CD8-positive, alpha-beta T cell (primary cell): ENCODE measurements at regions of chr22 and their contacts with region 1.

Region 1: DNA sequence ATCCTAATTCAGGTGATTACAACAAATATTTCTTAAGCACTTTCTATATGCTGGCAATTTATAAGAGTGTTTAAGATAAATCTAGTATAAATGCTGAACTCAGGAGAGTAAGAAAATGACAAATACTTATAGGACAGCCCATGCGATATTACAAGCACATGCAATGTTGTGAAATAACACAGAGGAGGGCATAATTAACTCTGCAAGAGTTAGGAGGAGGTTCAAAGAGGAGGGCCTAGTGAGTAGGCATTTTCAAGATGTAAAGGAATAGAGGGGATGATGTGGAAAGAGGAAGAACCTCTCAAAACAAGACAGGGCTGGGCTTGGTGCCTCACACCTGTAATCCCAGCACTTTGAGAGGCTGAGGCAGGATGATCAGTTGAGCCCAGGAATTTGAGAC is 37.1 kb upstream of the IL17RA start:
- DNase-seq: no peak
- ATAC-seq: no peak
- H3K4me3 ChIP-seq: no peak overlapping the region
- H3K4me3 Mint-ChIP-seq: no peak overlapping the region
- H3K27ac ChIP-seq: no peak overlapping the region
- H3K27ac Mint-ChIP-seq: no peak overlapping the region
- H3K4me1 ChIP-seq: no peaks in the 10 kb centered on the region
- H3K4me1 Mint-ChIP-seq: no peaks in the 10 kb centered on the region
- H3K27me3 ChIP-seq: no peaks in the 10 kb centered on the region
- H3K27me3 Mint-ChIP-seq: peaks cover 3% of the 10 kb centered on the region
- CTCF ChIP-seq: no peak

Region 2: GRCh38 chr22:16917144-16918003 is 130.3 kb before region 1 on chr22:
- CTCF ChIA-PET with region 1: no interaction called
- POLR2A ChIA-PET with region 1: no interaction called
- intact Hi-C with region 1: no loop called
- DNase-seq: peak; percentile 3 to 65 (median 42)
- ATAC-seq: no peak
- H3K4me3 ChIP-seq: no peak overlapping the region
- H3K4me3 Mint-ChIP-seq: no peak overlapping the region
- H3K27ac ChIP-seq: no peak overlapping the region
- H3K27ac Mint-ChIP-seq: no peak overlapping the region
- H3K4me1 ChIP-seq: no peaks in the 10 kb centered on the region
- H3K4me1 Mint-ChIP-seq: no peaks in the 10 kb centered on the region
- H3K27me3 ChIP-seq: peaks cover 2 to 4% of the 10 kb centered on the region in 2 experiments
- H3K27me3 Mint-ChIP-seq: peaks cover 26% of the 10 kb centered on the region
- CTCF ChIP-seq: peak; percentile 46

Region 3: DNA sequence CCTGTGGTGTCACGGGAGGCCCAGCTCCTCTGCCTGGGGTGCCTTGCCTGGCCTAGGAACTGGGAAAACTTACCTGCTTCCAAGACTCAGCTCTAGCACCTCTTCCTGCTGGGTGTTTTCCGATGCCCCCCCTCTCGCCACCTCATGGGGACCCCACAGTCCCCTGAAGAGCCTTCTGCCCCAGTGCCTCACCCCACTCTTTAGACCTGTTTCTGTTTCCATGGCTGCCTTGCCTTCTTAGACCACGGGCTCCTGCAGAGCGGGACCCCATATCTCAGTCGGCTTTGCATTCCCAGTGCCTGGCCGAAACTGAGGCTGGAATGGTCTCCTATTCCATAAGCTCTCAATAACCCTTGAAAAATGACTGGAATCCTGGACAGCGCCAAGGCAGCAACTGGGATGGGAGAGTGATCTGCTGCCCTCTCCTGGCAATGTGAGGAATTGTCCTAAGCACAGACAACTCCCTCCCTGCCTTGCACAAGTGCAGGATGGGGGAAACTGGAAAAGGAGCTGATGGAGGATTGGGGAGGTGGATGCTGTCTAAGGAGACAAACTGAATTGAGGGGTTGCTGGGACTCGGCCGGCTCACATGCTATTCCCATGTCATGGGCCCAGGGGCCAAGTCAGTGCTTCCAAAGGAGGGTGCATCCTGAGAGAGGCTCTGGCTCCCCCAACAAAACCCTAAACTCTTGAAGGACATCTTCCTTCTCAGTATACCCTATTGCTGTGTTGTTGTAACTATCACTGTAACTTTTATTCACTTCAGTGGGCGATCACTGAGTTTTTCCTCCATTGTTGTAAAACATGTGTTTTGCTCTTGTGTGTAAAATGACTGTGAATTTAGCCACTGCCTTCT is 10.5 kb after region 1 on chr22:
- CTCF ChIA-PET with region 1: interaction called, 19 read pairs
- POLR2A ChIA-PET with region 1: no interaction called
- intact Hi-C with region 1: no loop called
- DNase-seq: peak in 7 of 9 experiments; percentile 25 to 65 (median 52)
- ATAC-seq: peak; percentile 62
- H3K4me3 ChIP-seq: no peak overlapping the region
- H3K4me3 Mint-ChIP-seq: no peak overlapping the region
- H3K27ac ChIP-seq: no peak overlapping the region
- H3K27ac Mint-ChIP-seq: no peak overlapping the region
- H3K4me1 ChIP-seq: peaks cover 3% of the 10 kb centered on the region
- H3K4me1 Mint-ChIP-seq: peaks cover 4% of the 10 kb centered on the region
- H3K27me3 ChIP-seq: no peaks in the 10 kb centered on the region
- H3K27me3 Mint-ChIP-seq: peaks cover 7% of the 10 kb centered on the region
- CTCF ChIP-seq: peak; percentile 96